ENCODE measurements at regions of chr19 and their contacts with region 1.

Region 1: GRCh38 chr19:48713864-48714758 is 5.4 kb downstream of the MAMSTR start:
- DNase-seq: peak; percentile 99
- H3K4me3 ChIP-seq: peak overlapping the region; percentile 63
- H3K27ac ChIP-seq: peak overlapping the region; percentile 26 to 79
- H3K4me1 ChIP-seq: peaks cover 27% of the 10 kb centered on the region
- H3K27me3 ChIP-seq: no peaks in the 10 kb centered on the region
- CTCF ChIP-seq: no peak
- EP300 ChIP-seq: no peak
- POLR2A ChIP-seq: no peak

Region 2: GRCh38 chr19:48646001-48646721 is 68.0 kb before region 1 on chr19 and contains the start of gene CA11:
- intact Hi-C with region 1: loop called in 1 of 4 experiments (anchors 10 kb)
- DNase-seq: peak; percentile 93 to 95 (median 94)
- H3K4me3 ChIP-seq: peak within 1 kb of the TSS; percentile 56
- H3K27ac ChIP-seq: peak within 1 kb of the TSS; percentile 92 to 97
- H3K4me1 ChIP-seq: peaks cover 4% of the 10 kb centered on the region
- H3K27me3 ChIP-seq: no peaks in the 10 kb centered on the region
- CTCF ChIP-seq: peak; percentile 94 to 95 (median 94)
- EP300 ChIP-seq: no peak
- POLR2A ChIP-seq: peak; percentile 71
- total RNA-seq, gene CA11: 14.9 to 52.5 (median 40.8) TPM

Region 3: GRCh38 chr19:48674921-48675824 is 38.9 kb before region 1 on chr19:
- intact Hi-C with region 1: loop called in 2 of 4 experiments (anchors 2 to 5 kb)
- DNase-seq: peak; percentile 82 to 87 (median 83)
- H3K4me3 ChIP-seq: no peak overlapping the region
- H3K27ac ChIP-seq: no peak overlapping the region
- H3K4me1 ChIP-seq: peaks cover 3% of the 10 kb centered on the region
- H3K27me3 ChIP-seq: no peaks in the 10 kb centered on the region
- CTCF ChIP-seq: peak; percentile 84 to 91 (median 89)
- EP300 ChIP-seq: no peak
- POLR2A ChIP-seq: no peak